ENCODE measurements at regions of chr2 and their contacts with region 1.

Region 1: GRCh38 chr2:70142590-70143313 is 48.1 kb downstream of the C2orf42 start:
- DNase-seq: peak; percentile 100
- ATAC-seq: peak; percentile 69
- H3K4me3 Mint-ChIP-seq: peak overlapping the region; percentile 89
- H3K27ac Mint-ChIP-seq: peak overlapping the region; percentile 98
- H3K4me1 Mint-ChIP-seq: peaks cover 52% of the 10 kb centered on the region
- H3K27me3 Mint-ChIP-seq: no peaks in the 10 kb centered on the region

Region 2: DNA sequence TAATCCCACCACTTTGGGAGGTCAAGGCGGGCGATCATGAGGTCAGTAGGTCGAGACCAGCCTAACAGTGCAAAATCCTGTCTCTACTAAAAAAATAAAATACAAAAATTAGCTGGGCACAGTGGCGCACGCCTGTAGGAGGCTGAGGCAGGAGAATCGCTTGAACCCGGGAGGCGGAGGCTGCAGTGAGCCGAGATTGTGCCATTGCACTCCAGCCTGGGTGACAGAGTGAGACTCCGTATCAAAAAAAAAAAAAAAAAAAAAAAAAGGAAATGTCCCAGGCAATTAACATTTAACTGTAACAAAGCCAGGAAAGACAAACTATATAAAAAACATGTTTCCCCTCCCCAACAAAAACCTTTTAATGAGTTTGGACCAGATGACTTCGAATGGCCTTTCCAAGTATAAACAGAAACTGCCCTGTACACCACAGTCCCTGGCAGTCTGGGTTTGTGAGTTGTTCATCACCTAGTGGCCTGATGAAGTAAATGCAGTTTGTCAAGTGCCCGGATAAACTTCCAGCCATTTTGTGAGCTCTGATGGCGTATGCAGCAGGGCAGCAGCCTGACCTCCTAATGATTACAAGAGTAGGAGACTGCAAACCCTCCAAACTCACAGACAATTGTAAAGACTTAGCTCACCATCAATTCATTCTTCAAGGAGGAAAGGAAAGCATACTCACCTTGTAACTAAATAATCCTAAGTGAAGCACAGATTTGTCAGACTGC is 72.0 kb before region 1 on chr2:
- POLR2A ChIA-PET with region 1: interaction called, 38 read pairs
- DNase-seq: no peak
- ATAC-seq: peak; percentile 76
- H3K4me3 Mint-ChIP-seq: peak overlapping the region; percentile 77
- H3K27ac Mint-ChIP-seq: peak overlapping the region; percentile 96
- H3K4me1 Mint-ChIP-seq: peaks cover 40% of the 10 kb centered on the region
- H3K27me3 Mint-ChIP-seq: no peaks in the 10 kb centered on the region

Region 3: GRCh38 chr2:70104231-70105111 is 38.3 kb before region 1 on chr2:
- POLR2A ChIA-PET with region 1: interaction called, 169 read pairs
- DNase-seq: no peak
- ATAC-seq: no peak
- H3K4me3 Mint-ChIP-seq: peak overlapping the region; percentile 85
- H3K27ac Mint-ChIP-seq: peak overlapping the region; percentile 96
- H3K4me1 Mint-ChIP-seq: peaks cover 50% of the 10 kb centered on the region
- H3K27me3 Mint-ChIP-seq: no peaks in the 10 kb centered on the region

Region 4: GRCh38 chr2:70132244-70133126 is 10.3 kb before region 1 on chr2:
- POLR2A ChIA-PET with region 1: interaction called, 44 read pairs
- DNase-seq: no peak
- ATAC-seq: peak; percentile 51
- H3K4me3 Mint-ChIP-seq: peak overlapping the region; percentile 84
- H3K27ac Mint-ChIP-seq: peak overlapping the region; percentile 96
- H3K4me1 Mint-ChIP-seq: peaks cover 60% of the 10 kb centered on the region
- H3K27me3 Mint-ChIP-seq: no peaks in the 10 kb centered on the region

Region 5: GRCh38 chr2:71592181-71592711 is 1449.5 kb after region 1 on chr2:
- POLR2A ChIA-PET with region 1: no interaction called
- DNase-seq: no peak
- ATAC-seq: no peak
- H3K4me3 Mint-ChIP-seq: no peak overlapping the region
- H3K27ac Mint-ChIP-seq: no peak overlapping the region
- H3K4me1 Mint-ChIP-seq: peaks cover 6% of the 10 kb centered on the region
- H3K27me3 Mint-ChIP-seq: no peaks in the 10 kb centered on the region

Measured in activated naive CD8-positive, alpha-beta T cell treated with anti-CD3 and anti-CD28 coated beads, Interleukin-2, amount 10 ng/mL, durations not matched to agents 7 days and 5 days (primary cell).